Heart left ventricle (tissue), 16 donors: ENCODE measurements at regions of chr17 and their contacts with region 1.

Region 1: GRCh38 chr17:15257258-15257788 is 7.8 kb downstream of the PMP22 start:
- DNase-seq: peak; percentile 85 to 89 (median 86)
- ATAC-seq: peak; percentile 50 to 59 (median 56)
- H3K4me3 ChIP-seq: peak overlapping the region in 9 of 12 donors; percentile 21 to 49 (median 35)
- H3K27ac ChIP-seq: peak overlapping the region in 11 of 12 donors; percentile 27 to 99 (median 57)
- H3K4me1 ChIP-seq: peaks cover 2 to 82% (median 66%) of the 10 kb centered on the region in 12 donors
- H3K27me3 ChIP-seq: peaks cover 0 to 10% (median 0%) of the 10 kb centered on the region in 9 donors
- CTCF ChIP-seq: peak; percentile 83 to 98 (median 91)
- POLR2A ChIP-seq: no peak

Region 2: DNA sequence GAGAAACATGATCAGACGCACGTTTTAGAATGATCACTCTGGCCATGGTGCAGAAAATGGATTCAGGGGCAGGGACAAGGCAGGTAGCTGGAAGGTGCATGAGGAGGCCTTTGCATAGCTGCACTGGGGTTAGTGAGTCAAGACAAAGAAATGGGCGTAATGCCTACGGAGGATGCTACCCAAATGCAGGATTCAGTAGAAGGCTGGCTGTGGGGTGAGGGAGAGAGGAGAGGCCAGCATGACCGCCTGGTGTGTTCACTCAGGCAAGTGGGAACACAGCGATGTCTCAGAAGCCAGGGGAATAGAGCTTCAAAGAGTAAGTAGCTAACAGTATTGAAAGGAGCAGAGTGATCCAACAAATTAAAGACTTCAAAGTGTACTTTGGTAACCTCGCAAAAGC is 23.4 kb before region 1 on chr17:
- intact Hi-C with region 1: loop called in 1 of 10 experiments (anchors 2 kb)
- DNase-seq: no peak
- ATAC-seq: no peak
- H3K4me3 ChIP-seq: no peak overlapping the region
- H3K27ac ChIP-seq: peak overlapping the region in 7 of 12 donors; percentile 10 to 68 (median 54)
- H3K4me1 ChIP-seq: peaks cover 8 to 89% (median 56%) of the 10 kb centered on the region in 12 donors
- H3K27me3 ChIP-seq: no peaks in the 10 kb centered on the region
- CTCF ChIP-seq: no peak
- POLR2A ChIP-seq: no peak

Region 3: GRCh38 chr17:15341385-15341849 is 84.1 kb after region 1 on chr17 and contains the start of gene TEKT3:
- intact Hi-C with region 1: loop called in 4 of 10 experiments (anchors 5 to 10 kb)
- DNase-seq: peak; percentile 84 to 93 (median 92)
- ATAC-seq: peak; percentile 99 to 100 (median 100)
- H3K4me3 ChIP-seq: peak within 1 kb of the TSS; percentile 30 to 76 (median 54)
- H3K27ac ChIP-seq: peak within 1 kb of the TSS in 2 of 12 donors; percentile 20 to 26
- H3K4me1 ChIP-seq: peaks cover 0 to 7% (median 5%) of the 10 kb centered on the region in 12 donors
- H3K27me3 ChIP-seq: peaks cover 0 to 29% (median 2%) of the 10 kb centered on the region in 9 donors
- CTCF ChIP-seq: no peak
- POLR2A ChIP-seq: peak in 1 of 2 donors; percentile 50
- total RNA-seq, gene TEKT3: 0.32 to 1.0 (median 0.71) TPM in 6 of 9 donors, not detected in the others

Region 4: GRCh38 chr17:15409721-15410250 is 152.5 kb after region 1 on chr17:
- intact Hi-C with region 1: loop called in 2 of 10 experiments (anchors 2 to 5 kb)
- DNase-seq: peak in 1 of 5 donors; percentile 60
- ATAC-seq: peak; percentile 46 to 75 (median 66)
- H3K4me3 ChIP-seq: peak overlapping the region in 6 of 12 donors; percentile 16 to 43 (median 30)
- H3K27ac ChIP-seq: peak overlapping the region; percentile 15 to 82 (median 76)
- H3K4me1 ChIP-seq: peaks cover 0 to 59% (median 9%) of the 10 kb centered on the region in 12 donors
- H3K27me3 ChIP-seq: no peaks in the 10 kb centered on the region
- CTCF ChIP-seq: no peak
- POLR2A ChIP-seq: peak in 1 of 2 donors; percentile 17

Region 5: DNA sequence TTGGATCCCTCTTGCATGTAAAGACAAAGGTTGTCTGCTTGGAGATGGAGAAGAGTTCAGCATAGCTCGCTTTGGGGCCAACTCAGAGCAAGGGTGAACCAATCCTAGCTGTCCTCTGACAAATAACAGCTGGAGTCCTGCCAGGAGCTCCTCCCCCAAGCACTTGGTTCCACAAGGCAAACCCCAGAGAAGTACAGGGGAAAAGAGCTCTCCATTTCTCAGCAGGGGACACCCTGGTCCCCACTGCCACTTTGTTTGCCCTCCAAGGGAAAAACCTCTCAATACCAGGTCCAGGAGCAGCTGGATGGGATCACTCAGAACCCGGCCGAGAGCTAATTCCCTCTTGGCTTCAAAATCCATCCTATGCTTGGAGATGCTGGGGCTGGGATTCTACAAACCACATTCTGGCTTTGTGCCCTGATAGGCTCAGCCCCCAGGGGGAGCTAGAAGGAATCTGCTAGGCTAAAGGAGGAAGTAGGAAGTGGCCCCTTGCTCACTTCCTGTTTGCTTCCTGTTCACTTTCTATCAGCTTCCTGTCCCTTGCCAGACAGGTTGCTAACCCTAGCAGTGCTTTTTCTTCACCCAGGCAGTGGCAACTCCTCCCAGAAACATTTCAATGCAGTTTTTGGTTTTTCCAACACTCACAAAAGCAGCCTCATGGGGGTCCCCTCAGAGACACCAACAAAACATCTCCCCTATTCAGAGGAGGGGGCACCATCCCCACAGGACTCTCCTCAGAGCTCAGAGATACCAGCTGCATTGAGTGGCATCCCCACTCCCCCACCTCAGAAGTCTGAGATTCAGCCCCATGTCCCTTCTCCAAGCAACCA is 179.4 kb after region 1 on chr17:
- intact Hi-C with region 1: loop called in 7 of 10 experiments (anchors 5 to 10 kb)
- DNase-seq: peak; percentile 71 to 91 (median 76)
- ATAC-seq: peak; percentile 58 to 66 (median 62)
- H3K4me3 ChIP-seq: no peak overlapping the region
- H3K27ac ChIP-seq: peak overlapping the region; percentile 11 to 85 (median 75)
- H3K4me1 ChIP-seq: peaks cover 7 to 58% (median 23%) of the 10 kb centered on the region in 12 donors
- H3K27me3 ChIP-seq: no peaks in the 10 kb centered on the region
- CTCF ChIP-seq: peak in 11 of 12 donors; percentile 19 to 54 (median 46)
- POLR2A ChIP-seq: peak in 1 of 2 donors; percentile 24

Region 6: GRCh38 chr17:15456972-15457722 is 199.8 kb after region 1 on chr17:
- intact Hi-C with region 1: loop called in 6 of 10 experiments (anchors 5 kb)
- DNase-seq: peak; percentile 47 to 76 (median 57)
- ATAC-seq: peak; percentile 56 to 72 (median 68)
- H3K4me3 ChIP-seq: peak overlapping the region in 3 of 12 donors; percentile 5 to 23 (median 5)
- H3K27ac ChIP-seq: peak overlapping the region; percentile 47 to 87 (median 78)
- H3K4me1 ChIP-seq: peaks cover 0 to 36% (median 18%) of the 10 kb centered on the region in 12 donors
- H3K27me3 ChIP-seq: no peaks in the 10 kb centered on the region
- CTCF ChIP-seq: peak in 9 of 12 donors; percentile 17 to 55 (median 36)
- POLR2A ChIP-seq: no peak

Region 7: DNA sequence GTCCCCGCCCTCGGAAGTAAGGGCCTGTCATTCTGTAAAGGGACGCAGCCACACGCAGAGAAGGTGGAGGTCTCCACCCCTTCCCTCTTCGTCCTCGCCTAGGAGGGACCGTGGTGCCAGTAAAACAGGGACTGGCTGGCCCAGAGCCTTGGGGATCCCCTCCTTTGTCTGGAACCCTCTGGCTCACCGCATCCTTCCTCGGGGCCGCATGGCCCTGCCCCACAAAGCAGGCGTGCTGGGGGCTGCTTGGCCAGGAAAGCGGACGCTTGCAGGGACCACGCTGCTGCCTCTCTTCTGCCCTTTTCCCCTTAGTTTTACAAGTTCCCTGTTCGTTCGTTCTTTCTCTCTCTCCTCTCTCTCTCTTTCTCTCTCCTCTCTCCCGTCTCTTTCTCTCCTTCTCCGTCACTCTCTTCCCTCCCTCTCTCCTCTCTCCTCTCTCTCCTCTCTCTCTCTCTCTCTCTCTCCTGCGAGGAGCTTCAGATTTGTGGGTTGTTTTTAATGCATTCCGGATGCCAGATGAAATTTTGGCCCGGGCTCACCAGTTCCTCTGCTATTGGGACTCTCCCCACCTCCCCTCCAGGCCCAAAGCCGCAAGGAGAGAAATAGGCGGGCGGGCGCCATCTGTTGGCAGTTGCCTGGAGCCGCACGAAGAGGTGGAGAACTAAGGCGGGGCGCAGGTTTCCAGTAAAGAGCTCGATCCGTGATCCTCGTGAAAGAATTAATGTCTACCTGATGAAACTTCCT is 245.2 kb after region 1 on chr17:
- intact Hi-C with region 1: loop called (anchors 1 to 5 kb)
- DNase-seq: peak; percentile 90 to 95 (median 91)
- ATAC-seq: peak; percentile 78 to 95 (median 91)
- H3K4me3 ChIP-seq: peak overlapping the region in 10 of 12 donors; percentile 10 to 56 (median 42)
- H3K27ac ChIP-seq: peak overlapping the region; percentile 61 to 85 (median 78)
- H3K4me1 ChIP-seq: peaks cover 0 to 17% (median 11%) of the 10 kb centered on the region in 12 donors
- H3K27me3 ChIP-seq: no peaks in the 10 kb centered on the region
- CTCF ChIP-seq: peak; percentile 80 to 96 (median 91)
- POLR2A ChIP-seq: no peak